Activated CD4-positive, alpha-beta T cell treated with anti-CD3 and anti-CD28 coated beads for 36 hours (primary cell): ENCODE measurements at regions of chr3 and their contacts with region 1.

Region 1: DNA sequence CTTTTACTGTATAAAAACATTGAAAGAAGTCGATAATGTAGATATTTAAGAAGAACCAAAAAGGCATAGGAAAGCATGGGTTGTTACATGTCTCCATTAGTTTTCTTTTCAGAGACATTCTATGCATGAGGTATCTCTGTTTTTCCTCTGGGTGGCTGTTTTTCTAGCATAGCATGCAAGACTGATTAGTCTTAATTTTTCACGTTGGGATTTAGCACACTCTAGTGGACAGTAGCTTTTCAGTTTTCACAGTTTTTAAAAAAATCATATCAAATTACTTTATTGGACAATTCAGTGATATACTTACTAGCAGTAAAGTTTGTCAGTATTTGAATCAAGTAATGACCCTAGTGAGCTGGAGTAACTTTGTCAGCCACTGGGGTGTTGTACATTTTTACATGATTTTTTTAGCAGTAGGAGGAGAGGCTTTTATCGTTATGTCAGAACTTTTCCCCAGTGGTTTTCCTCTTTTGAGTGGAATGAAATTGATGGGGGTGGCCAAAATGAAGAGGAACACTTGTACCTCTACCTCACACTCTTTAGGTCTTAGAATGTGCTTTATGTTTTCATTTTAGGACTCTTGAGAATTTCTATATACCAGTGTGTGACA is 57.2 kb downstream of the SEC22A start:
- DNase-seq: no peak
- ATAC-seq: peak; percentile 61
- H3K4me3 Mint-ChIP-seq: no peak overlapping the region
- H3K27ac Mint-ChIP-seq: no peak overlapping the region
- H3K4me1 Mint-ChIP-seq: no peaks in the 10 kb centered on the region
- H3K27me3 Mint-ChIP-seq: no peaks in the 10 kb centered on the region

Region 2: DNA sequence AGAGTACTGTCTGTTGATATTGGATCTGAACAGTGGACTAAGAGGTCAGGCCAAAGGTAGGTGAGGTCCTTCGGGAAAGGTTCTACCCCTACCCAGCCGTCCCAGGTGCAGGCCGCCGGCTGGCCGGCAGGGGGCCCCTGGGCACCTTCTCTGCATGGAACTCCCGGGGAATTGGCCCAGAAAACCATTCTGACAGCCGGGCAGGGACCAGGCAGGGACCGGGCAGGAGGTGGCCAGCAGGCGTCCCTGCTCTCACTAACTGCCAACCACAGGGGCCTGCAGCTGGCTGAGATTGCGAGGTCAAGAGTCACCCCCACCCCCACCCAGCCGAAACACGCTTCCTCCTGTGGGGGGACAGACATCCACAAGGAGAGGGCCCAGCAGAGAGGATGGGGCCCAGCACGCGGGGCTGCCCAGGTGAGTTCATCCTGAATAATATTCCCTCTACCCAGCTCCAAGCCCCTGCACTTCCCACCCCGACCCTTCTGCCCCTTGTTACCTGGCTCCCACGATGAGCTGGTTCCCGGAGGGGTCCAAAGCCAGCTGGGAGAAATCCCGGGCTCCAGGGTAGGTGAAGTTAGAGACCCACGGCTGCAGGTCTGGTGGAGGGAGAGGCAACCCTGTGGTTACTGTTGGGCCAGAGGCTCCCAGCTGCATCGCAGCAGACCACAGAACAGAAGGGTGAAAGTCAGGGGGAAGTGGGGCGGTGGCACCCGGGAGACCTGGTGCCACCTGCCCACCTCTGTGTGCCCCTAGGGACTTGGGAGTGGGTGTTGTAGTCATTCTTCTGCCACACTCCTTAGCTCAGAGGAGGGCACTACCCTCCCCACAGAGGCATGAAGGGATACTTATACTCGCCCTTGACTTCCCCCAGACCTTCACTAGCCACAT is 315.7 kb before region 1 on chr3:
- CTCF ChIA-PET with region 1: no interaction called
- POLR2A ChIA-PET with region 1: no interaction called
- intact Hi-C with region 1: loop called (anchors 2 to 5 kb)
- DNase-seq: peak; percentile 69
- ATAC-seq: peak; percentile 72
- H3K4me3 Mint-ChIP-seq: no peak overlapping the region
- H3K27ac Mint-ChIP-seq: no peak overlapping the region
- H3K4me1 Mint-ChIP-seq: no peaks in the 10 kb centered on the region
- H3K27me3 Mint-ChIP-seq: peaks cover 6% of the 10 kb centered on the region